Gastrocnemius medialis (tissue), 4 donors: ENCODE measurements at regions of chr19 and their contacts with region 1.

Region 1: DNA sequence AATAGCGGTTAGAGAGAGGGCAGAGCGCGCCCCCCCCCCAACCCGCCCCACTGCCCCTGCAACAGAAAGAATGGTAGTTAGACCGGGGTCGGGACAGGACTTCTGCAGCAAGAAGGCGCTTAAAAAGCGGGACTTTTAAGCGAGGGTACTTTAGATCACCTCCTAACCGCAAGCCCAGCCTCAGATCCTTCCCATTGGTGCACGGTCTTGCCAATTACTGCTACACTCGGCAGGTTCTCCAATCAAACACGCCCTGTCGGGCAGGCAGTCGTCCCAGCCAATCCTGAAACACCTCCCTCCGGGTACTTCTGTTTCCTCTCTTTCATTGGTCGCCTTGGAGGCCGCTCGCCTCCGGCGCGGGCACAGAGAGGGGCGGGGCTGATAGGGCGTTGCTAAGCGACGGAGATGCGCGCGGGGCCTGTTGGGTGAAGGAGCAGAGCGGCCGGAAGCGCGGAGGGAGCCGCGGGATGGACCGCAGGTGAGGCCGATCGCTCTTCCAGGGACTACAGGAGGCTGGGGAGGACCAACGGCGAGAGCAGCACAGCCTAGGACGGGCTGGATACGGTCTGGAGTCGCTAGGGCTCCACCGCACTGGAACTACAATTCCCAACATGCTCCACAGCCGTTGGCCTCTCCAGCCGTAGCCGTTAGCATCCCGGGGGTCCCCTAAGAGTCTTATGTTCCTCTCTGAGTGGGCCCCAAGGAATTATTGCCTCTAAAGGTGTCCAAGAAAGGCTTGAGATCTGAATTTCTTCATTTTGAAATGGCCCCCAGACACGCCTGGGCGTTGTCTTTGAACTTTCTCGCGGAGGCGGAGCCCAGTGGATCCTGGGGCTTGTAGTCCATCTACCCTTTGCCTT is at the start of gene PROSER3:
- DNase-seq: peak; percentile 99 to 100
- ATAC-seq: peak; percentile 85 to 91
- H3K4me3 ChIP-seq: peak within 1 kb of the TSS; percentile 72 to 84 (median 76)
- H3K27ac ChIP-seq: peak within 1 kb of the TSS; percentile 89 to 97 (median 95)
- H3K4me1 ChIP-seq: peaks cover 28 to 43% of the 10 kb centered on the region in 2 donors
- H3K27me3 ChIP-seq: no peaks in the 10 kb centered on the region
- CTCF ChIP-seq: no peak
- POLR2A ChIP-seq: peak; percentile 56 to 82
- total RNA-seq, gene PROSER3: 0.63 to 4.3 (median 3.0) TPM

Region 2: GRCh38 chr19:35044317-35045117 is 713.5 kb before region 1 on chr19:
- in situ Hi-C with region 1: no loop called
- intact Hi-C with region 1: loop called (anchors 5 kb)
- DNase-seq: peak in 1 of 2 donors; percentile 68
- ATAC-seq: no peak
- H3K4me3 ChIP-seq: no peak overlapping the region
- H3K27ac ChIP-seq: peak overlapping the region; percentile 97 to 98 (median 98)
- H3K4me1 ChIP-seq: peaks cover 59 to 63% of the 10 kb centered on the region in 2 donors
- H3K27me3 ChIP-seq: no peaks in the 10 kb centered on the region
- CTCF ChIP-seq: peak; percentile 96 to 98 (median 97)
- POLR2A ChIP-seq: no peak

Region 3: DNA sequence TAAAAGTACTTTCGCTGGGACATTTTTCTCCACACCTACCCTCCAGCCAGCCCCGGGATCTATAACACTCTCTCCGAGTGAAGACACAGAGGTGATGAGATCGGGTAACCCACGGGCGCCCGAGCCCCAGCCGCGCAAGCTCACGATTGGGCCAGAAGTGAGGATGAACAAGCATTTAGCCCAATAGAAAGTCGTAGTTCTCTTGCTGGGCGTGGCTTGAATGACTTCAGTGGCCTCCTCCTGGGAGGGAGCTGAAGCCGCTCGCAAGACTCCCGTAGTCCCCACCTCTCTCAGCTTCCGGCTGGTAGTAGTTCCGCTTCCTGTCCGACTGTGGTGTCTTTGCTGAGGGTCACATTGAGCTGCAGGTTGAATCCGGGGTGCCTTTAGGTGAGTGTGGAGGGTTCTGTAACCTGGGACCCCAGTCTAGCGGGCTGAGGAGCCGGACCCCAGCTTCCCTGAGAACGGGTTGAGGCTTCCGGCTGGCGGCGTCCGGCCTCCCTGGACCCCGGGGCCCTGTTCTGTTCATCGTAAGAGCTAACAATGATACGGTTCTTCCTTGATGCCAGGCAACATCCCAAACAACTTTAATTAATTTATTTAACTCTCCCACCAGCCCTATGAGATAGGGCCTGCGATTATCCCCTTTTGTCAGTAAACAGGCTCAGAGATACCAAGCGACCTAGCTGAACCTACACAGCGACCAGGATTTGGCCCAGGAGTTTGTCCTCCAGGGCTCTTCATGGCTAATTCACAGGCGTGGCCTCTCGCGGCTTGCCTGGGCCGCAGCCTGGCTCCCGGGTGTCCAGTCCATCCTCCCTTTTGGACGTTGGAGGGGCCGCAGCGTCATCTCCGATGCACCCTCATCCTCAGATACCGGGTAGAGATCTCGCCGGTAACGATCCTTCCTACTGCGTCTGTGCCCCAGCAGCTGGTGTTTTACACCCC is 109.7 kb before region 1 on chr19 and contains the start of gene COX6B1:
- in situ Hi-C with region 1: no loop called
- intact Hi-C with region 1: loop called (anchors 5 kb)
- DNase-seq: peak; percentile 97 to 98
- ATAC-seq: peak; percentile 94
- H3K4me3 ChIP-seq: peak within 1 kb of the TSS; percentile 74 to 98 (median 90)
- H3K27ac ChIP-seq: peak within 1 kb of the TSS; percentile 92 to 98 (median 94)
- H3K4me1 ChIP-seq: peaks cover 23 to 32% of the 10 kb centered on the region in 2 donors
- H3K27me3 ChIP-seq: no peaks in the 10 kb centered on the region
- CTCF ChIP-seq: no peak
- POLR2A ChIP-seq: peak; percentile 76 to 85
- total RNA-seq, gene COX6B1: 899 to 1,245 (median 976) TPM

Region 4: DNA sequence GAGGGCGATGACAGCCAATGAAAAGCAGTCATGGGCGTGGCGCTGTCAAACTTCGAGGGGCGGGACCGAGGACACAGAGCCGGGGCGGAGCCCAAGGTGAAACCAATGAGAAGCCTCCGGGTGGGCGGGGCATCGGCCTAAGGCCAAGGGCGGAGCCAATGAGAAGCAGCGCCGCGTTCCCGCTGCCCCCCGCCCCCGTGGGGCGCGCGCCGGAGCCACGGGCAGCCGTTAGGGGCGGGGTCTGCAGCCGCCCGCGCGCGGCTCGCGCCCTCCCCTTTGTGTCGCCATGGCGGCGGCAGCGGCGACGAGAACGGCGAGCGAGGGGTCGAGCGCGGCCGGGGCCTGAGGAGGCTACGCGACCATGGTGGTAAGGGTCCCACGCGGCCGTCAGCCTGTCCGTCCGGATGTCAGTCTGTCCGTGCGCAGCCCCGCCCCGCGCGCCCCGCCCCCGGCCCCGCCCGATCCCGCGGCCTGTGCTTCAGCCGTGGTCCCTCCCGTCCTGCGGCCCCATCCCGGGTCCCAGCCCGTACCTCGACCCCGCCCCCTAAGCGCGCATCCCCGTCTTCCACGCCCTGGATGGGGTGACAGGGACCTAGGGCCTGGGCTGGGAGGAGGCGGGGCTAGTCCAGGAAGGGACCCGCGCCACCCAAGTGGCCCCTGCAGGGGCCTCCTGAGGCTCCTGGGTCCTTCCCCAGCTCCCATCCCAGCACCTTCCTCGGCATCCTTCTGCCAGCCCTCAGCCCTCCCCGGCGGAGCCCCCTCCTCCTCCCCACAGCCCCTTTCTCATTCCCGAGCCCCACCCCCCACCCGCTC is 17.5 kb after region 1 on chr19 and contains the start of gene ARHGAP33:
- in situ Hi-C with region 1: no loop called
- intact Hi-C with region 1: loop called (anchors 1 kb)
- DNase-seq: peak; percentile 95 to 98
- ATAC-seq: peak; percentile 98
- H3K4me3 ChIP-seq: peak within 1 kb of the TSS; percentile 60 to 81 (median 73)
- H3K27ac ChIP-seq: peak within 1 kb of the TSS; percentile 35 to 69 (median 45)
- H3K4me1 ChIP-seq: peaks cover 4 to 5% of the 10 kb centered on the region in 2 donors
- H3K27me3 ChIP-seq: no peaks in the 10 kb centered on the region
- CTCF ChIP-seq: no peak
- POLR2A ChIP-seq: no peak
- total RNA-seq, gene ARHGAP33: 0.22 to 4.7 (median 2.2) TPM

Region 5: DNA sequence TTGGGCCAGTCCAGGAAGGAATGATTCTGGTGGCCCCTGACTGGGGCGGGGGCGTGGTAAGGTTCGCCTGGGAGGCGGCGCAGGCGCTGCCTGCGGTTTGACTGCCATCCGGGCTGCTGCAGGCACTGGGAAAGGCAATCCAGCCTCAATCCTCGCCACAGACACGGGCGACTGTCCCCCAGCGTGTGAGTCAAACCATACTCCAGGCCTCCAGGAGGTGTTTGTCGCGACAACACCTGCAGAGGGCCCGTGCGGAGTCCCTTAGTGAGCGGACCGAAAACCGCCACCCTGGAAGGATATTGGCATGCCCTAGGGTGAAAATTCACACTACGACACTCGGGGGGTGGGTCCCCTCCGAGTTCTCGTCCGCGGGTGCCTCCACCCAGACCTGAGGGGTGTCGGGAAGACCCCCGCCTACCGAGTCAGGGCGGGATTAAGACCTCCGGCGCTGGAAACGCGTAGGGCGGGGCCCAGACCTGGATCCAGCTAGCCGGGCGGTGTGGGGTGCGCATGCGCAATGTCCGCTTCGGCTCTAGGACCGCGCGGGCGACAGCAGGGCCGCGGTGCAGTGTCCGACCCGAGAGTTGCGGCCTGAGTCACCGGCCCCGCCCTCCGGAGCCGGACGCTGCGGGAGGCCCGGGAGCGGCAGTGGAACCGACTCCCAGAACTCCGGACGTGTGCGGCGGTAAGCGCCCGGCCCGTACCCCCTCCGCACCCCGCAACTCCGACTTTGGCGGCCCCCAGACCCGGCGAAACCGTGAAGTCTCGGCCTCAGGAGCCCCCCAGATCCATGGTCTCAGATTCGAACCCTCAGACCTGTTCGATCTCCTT is 381.7 kb after region 1 on chr19 and contains the start of gene CAPNS1:
- in situ Hi-C with region 1: loop called in 1 of 4 experiments (anchors 25 kb)
- intact Hi-C with region 1: no loop called
- DNase-seq: peak; percentile 95 to 97
- ATAC-seq: peak; percentile 78 to 86
- H3K4me3 ChIP-seq: peak within 1 kb of the TSS; percentile 90 to 97 (median 92)
- H3K27ac ChIP-seq: peak within 1 kb of the TSS; percentile 97 to 100 (median 98)
- H3K4me1 ChIP-seq: peaks cover 12 to 26% of the 10 kb centered on the region in 2 donors
- H3K27me3 ChIP-seq: no peaks in the 10 kb centered on the region
- CTCF ChIP-seq: peak in 2 of 5 experiments; percentile 8 to 33
- POLR2A ChIP-seq: peak; percentile 98 to 99
- total RNA-seq, gene CAPNS1: 94.8 to 252 (median 165) TPM

Region 6: DNA sequence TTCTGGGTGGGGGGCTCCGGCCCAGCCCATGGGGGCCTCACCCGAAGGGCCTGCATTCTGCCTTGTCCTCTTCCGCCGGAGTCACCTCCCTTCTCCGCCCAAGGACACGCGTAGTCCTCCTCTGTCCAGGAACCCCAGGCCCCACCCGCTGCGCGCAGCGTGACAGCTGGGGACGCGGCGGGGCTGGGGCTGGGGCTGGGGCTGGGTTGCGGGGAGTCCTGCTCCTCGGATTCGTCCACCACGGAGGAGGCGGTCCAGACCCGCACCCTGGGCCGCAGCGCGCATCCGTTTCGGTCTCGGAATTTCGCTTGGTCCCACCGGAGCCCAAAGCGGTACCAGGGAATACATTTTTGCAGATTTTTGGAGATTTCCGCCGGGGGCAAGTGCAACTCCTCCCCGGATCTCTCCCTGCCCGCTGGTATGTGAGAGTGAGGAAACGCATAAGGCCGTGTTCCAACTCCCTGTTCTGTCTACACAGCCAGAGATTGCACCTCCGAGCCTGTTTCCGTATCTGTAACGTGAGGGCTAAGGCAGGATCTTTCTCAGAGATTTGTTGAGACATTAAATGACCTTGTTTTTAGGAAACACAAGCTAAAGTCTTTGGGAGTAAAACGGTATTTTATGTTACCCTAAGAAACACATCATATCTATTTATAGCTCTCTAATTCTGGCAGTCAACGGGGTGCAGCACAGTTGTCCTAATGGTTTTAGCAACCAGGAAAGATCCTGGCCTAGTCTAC is 394.5 kb after region 1 on chr19 and contains the start of gene COX7A1:
- in situ Hi-C with region 1: loop called in 1 of 4 experiments (anchors 25 kb)
- intact Hi-C with region 1: loop called (anchors 5 kb)
- DNase-seq: peak; percentile 79 to 91
- ATAC-seq: peak; percentile 78 to 89
- H3K4me3 ChIP-seq: peak within 1 kb of the TSS; percentile 80 to 90 (median 90)
- H3K27ac ChIP-seq: peak within 1 kb of the TSS; percentile 97 to 100 (median 100)
- H3K4me1 ChIP-seq: peaks cover 24 to 29% of the 10 kb centered on the region in 2 donors
- H3K27me3 ChIP-seq: no peaks in the 10 kb centered on the region
- CTCF ChIP-seq: no peak
- POLR2A ChIP-seq: peak; percentile 86 to 87
- total RNA-seq, gene COX7A1: 165 to 421 (median 223) TPM